ENCODE measurements at regions of chr20 and their contacts with region 1.

Region 1: DNA sequence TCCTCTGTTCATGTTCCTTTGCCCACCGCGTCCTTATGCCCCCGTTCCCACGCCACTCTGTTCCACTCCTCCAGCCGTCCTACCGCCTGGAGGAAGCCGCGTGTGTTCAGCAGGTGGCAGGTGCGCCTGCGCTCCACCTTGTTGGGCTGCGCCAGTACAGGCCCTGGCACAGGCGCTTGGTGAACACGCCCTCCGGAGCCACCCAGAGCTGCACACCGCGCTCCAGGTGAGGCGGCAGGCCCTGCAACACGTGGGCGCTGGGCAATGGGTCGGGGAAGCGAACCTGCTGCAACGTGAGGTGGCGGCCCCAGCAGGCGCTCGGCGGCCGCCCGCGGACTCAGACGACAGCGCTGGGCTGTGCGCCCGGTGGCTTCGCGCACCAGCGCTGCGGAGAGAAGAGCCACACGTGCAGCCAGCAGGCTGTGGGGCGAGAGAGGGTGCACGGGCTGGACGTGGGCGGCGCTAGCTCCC is 4.1 kb upstream of the FOXS1 start:
- DNase-seq: no peak
- ATAC-seq: no peak
- H3K4me3 ChIP-seq: no peak overlapping the region
- H3K27ac ChIP-seq: no peak overlapping the region
- H3K4me1 ChIP-seq: peaks cover 16% of the 10 kb centered on the region
- H3K27me3 ChIP-seq: no peaks in the 10 kb centered on the region
- CTCF ChIP-seq: no peak

Region 2: DNA sequence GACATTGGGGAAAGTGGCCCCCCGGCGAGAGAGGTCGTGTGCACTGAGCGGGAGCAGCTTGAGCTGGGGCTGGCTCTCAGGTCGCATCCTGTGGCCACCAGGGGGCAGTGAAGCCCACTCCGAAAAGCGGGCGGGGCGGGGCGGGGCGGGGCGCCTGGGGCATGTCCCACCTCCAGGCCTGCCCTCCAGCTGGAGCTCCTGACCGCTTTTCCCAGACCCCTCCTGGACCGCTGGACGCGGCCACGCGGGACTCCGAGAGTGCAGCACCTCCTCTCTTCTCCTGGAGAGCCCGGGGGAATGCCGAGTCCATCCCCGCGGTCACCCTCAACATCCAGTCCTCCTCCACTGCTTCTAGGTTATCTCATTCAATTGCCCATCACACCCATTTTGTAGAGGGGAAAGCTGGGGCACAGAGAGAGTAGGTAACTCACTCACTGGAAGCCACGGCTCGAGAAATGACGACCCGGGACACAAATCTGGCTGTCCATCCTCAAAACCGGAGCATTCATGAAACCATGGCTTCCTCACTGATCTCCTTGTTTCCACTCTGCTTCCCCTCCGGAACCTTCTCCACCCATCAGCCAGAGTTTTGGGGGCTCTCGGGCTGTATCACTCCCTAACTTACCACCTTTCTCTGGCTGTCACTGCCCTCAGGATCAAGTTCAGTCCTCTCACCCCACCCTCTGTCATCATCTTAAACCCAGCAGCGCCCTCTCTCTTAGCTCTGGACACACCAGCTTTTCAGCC is 187.7 kb before region 1 on chr20:
- CTCF ChIA-PET with region 1: interaction called, 10 read pairs
- POLR2A ChIA-PET with region 1: no interaction called
- in situ Hi-C with region 1: no loop called
- intact Hi-C with region 1: no loop called
- DNase-seq: peak; percentile 74
- ATAC-seq: peak; percentile 81
- H3K4me3 ChIP-seq: peak overlapping the region; percentile 27 to 64
- H3K27ac ChIP-seq: peak overlapping the region; percentile 78
- H3K4me1 ChIP-seq: peaks cover 40% of the 10 kb centered on the region
- H3K27me3 ChIP-seq: no peaks in the 10 kb centered on the region
- CTCF ChIP-seq: peak; percentile 98

Region 3: GRCh38 chr20:31822421-31823330 is 26.8 kb before region 1 on chr20:
- CTCF ChIA-PET with region 1: interaction called, 13 read pairs
- POLR2A ChIA-PET with region 1: no interaction called
- in situ Hi-C with region 1: no loop called
- intact Hi-C with region 1: loop called (anchors 2 kb)
- DNase-seq: no peak
- ATAC-seq: peak; percentile 89
- H3K4me3 ChIP-seq: peak overlapping the region; percentile 14 to 44
- H3K27ac ChIP-seq: no peak overlapping the region
- H3K4me1 ChIP-seq: peaks cover 12% of the 10 kb centered on the region
- H3K27me3 ChIP-seq: no peaks in the 10 kb centered on the region
- CTCF ChIP-seq: peak; percentile 100

Region 4: DNA sequence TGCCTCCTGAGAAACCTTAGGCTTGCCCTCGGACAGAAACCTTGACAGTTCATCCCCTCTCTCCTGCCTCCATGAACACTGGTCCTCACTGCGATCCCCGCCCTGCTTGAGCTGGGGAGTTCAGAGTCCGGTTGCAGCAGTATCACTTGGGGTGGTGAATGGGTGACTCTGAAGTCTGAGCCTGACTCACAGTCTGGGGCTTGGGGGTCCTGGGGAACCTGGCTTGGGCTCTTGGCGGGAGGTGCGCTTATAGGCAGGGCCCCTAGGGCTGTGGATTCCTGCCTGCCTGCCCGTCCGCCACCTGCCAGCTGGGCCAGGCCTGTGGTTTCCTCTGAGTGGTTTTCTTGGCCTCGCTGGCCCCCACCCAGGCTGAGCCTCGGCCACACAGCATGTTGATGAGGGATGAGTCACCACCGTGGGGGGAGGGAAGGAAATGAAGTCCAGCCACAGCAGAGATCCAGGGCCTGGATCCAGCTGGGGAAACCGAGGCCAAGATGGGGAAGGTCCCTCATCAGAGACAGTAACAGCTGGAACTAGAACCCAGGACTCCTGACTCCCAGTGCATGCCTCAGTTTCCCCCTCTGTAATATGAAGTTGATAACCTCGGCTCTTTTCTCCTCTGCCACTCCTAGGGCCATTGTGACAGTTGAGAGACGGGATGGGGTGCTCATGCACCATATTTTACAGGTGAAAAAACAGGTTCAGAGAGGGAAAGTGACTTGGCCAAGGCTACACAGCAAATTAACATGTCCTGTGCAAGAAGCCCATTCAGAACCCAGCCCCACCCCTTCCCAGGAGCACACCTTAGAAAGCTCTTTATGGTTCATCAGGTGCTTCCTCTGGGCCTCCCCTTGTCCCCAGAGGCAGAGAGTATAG is 13.3 kb before region 1 on chr20:
- CTCF ChIA-PET with region 1: interaction called, 21 read pairs
- POLR2A ChIA-PET with region 1: interaction called, 5 read pairs
- in situ Hi-C with region 1: no loop called
- intact Hi-C with region 1: no loop called
- DNase-seq: no peak
- ATAC-seq: peak; percentile 81
- H3K4me3 ChIP-seq: no peak overlapping the region; a peak in 1 of 4 replicates
- H3K27ac ChIP-seq: peak overlapping the region; percentile 86
- H3K4me1 ChIP-seq: peaks cover 72% of the 10 kb centered on the region
- H3K27me3 ChIP-seq: no peaks in the 10 kb centered on the region
- CTCF ChIP-seq: no peak

Region 5: DNA sequence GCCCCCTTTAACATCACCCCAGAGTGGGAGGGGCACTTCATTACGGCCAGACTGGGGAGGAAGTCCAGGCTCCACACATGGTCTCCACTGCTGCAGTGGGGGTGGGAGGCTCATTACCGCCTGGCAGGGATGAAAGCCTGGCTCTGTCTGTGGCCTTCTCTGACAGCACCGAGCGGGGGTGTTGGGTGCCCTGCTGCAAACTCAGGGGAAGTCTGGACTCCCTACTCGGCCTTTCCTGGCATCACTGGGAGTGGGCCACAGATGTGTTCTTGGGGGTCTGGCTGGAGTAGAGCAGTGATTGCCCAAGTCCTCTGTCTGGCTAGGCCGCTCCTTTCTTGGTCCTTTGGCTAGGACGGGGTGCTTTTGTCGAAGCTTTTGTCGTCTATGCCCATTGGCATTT is 48.1 kb after region 1 on chr20:
- CTCF ChIA-PET with region 1: no interaction called
- POLR2A ChIA-PET with region 1: no interaction called
- in situ Hi-C with region 1: no loop called
- intact Hi-C with region 1: no loop called
- DNase-seq: no peak
- ATAC-seq: no peak
- H3K4me3 ChIP-seq: no peak overlapping the region
- H3K27ac ChIP-seq: no peak overlapping the region
- H3K4me1 ChIP-seq: no peaks in the 10 kb centered on the region
- H3K27me3 ChIP-seq: no peaks in the 10 kb centered on the region
- CTCF ChIP-seq: no peak

Region 6: DNA sequence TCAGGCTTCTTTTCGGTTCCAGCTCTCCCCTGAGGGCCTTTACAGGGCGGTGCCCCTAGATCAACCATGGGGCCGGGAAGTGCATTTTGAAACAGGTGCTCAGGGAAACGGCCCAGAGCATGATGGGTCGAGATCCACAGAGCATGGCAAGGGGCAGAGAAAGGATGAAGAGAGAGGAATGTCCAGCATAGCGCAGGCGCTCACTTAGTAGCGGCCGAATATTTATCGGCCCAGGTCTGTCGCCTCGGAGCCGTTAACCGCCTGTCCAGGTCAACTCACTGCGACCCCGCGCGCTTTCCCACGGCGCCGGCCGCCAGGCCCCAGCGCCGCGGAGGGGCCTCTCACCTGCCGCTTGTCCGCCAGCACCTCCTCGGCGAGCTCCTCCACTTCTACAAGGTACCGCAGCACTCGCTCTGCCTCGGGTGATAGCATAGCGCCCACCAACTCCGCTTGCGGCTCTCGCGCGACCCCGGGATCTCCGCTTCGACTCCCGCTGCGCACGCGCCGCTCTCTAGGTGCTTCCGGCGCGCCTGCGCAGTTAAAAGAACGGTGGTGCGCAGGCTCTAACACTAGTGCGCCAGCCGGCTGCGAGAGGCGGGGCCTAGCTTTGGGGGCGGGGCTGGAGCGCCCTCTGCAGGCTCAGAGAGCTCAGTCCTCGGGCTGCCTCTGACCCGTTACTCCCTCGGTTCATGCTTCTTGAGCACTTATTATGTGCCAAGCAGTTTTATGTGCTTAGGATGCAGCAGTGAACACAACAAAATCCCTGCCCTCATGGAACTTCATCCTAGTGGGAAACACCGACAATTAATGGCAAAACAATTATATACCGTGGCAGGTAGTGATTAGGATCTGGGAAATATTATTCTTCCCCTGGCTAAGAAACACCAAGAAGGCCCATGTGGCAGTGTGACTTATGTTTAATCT is 102.3 kb after region 1 on chr20 and contains the start of gene PDRG1:
- CTCF ChIA-PET with region 1: interaction called, 25 read pairs
- POLR2A ChIA-PET with region 1: interaction called, 6 read pairs
- in situ Hi-C with region 1: no loop called
- intact Hi-C with region 1: loop called (anchors 2 kb)
- DNase-seq: peak; percentile 93
- ATAC-seq: peak; percentile 99
- H3K4me3 ChIP-seq: peak within 1 kb of the TSS; percentile 79 to 97
- H3K27ac ChIP-seq: peak within 1 kb of the TSS; percentile 96
- H3K4me1 ChIP-seq: peaks cover 16% of the 10 kb centered on the region
- H3K27me3 ChIP-seq: no peaks in the 10 kb centered on the region
- CTCF ChIP-seq: peak; percentile 100
- total RNA-seq, gene PDRG1: 48.2 TPM

Region 7: GRCh38 chr20:32091888-32092346 is 242.4 kb after region 1 on chr20:
- CTCF ChIA-PET with region 1: interaction called, 6 read pairs
- POLR2A ChIA-PET with region 1: no interaction called
- in situ Hi-C with region 1: no loop called
- intact Hi-C with region 1: loop called (anchors 2 kb)
- DNase-seq: peak; percentile 67
- ATAC-seq: peak; percentile 83
- H3K4me3 ChIP-seq: no peak overlapping the region
- H3K27ac ChIP-seq: no peak overlapping the region
- H3K4me1 ChIP-seq: no peaks in the 10 kb centered on the region
- H3K27me3 ChIP-seq: peaks cover 3% of the 10 kb centered on the region; the same call in 1 of the 2 replicates
- CTCF ChIP-seq: peak; percentile 100

Measured in Panc1 (cell line).